Posterior vena cava (tissue), 2 donors: ENCODE measurements at regions of chr5 and their contacts with region 1.

Region 1: DNA sequence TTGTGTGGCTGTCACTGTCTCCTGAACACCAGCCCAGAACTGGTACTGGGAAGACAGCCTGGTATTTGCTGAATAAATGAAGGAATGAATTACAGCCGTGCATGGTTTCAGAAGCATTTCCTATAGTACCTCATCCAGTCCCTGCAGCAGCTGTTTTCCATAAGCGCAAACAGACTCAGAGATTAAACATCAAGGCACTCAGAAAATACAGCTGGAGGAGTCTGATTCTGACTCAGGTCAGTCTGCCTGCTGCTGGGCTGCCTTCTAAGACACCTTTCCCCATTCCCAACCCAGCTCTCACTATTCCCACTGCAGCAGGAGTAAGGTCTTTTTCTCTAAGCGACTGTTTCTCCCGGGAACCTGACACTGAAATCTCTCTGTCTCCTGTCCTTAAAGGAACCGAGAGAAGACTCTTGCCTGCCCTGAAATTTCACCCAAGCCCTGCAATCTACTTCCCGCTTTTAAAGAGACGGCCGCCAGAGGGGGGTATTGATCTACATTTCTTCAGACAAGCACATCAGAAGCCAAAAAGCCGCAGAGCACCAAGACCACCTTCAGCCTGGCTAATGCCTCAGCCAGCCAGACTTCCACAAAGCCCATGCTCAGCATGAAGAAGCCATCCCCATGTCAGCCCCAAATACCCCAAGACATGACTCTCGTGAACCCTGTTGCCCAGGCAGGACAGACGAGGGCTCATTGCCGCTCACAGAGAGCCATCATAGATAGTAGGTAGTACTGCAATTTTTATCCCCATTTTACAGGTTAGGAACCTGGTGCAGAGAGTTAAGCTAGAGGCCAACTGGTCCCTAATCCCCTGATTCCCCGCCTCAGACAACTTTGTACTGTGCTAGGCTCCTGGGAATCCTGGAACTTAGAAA is 5.4 kb upstream of the FOXI1 start:
- DNase-seq: peak; percentile 90

Region 2: DNA sequence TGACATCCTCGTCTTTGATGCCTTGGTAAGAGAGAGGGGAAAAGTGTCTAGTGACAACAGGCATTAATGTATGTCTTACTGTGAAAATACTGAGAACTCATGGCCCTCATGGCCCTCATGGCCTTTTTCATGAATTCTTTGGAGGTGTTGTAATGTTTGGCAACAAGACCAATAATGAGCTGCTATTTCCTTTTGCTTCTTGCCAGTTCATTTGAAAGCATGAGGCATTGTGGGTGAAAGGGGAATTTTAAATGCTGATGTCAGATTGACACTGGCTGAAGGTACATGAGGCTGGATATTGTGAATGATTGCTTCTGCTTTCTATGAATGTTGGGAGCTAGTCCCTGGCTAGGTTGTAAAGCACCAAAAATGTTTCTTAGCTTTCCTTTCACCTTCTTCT is 384.0 kb before region 1 on chr5:
- intact Hi-C with region 1: no loop called
- DNase-seq: no peak

Region 3: DNA sequence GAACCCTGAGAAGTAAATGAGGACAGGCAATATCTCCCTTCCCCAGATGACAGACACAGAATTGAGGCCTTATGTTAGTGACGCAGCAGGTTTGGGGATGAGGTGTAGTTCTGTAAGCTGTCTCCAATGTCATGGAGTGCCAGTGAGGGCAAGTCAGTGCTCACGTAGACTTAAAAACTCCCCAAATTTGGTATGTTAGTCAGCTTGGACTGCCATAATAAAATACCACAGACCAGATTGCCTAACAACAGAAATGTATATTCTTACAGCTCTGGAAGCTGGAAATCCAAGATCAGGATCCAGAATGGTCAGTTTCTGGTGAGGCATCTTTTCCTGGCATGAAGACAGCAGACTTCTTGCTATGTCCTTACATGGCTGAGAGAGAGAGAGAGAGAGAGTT is 20.3 kb after region 1 on chr5:
- intact Hi-C with region 1: loop called in 1 of 2 experiments (anchors 1 kb)
- DNase-seq: no peak

Region 4: GRCh38 chr5:170169996-170170395 is 69.7 kb after region 1 on chr5:
- intact Hi-C with region 1: loop called in 1 of 2 experiments (anchors 1 kb)
- DNase-seq: no peak

Region 5: GRCh38 chr5:170183816-170184687 is 83.7 kb after region 1 on chr5:
- intact Hi-C with region 1: loop called in 1 of 2 experiments (anchors 10 kb)
- DNase-seq: no peak